ENCODE measurements at regions of chrX and their contacts with region 1.

Region 1: DNA sequence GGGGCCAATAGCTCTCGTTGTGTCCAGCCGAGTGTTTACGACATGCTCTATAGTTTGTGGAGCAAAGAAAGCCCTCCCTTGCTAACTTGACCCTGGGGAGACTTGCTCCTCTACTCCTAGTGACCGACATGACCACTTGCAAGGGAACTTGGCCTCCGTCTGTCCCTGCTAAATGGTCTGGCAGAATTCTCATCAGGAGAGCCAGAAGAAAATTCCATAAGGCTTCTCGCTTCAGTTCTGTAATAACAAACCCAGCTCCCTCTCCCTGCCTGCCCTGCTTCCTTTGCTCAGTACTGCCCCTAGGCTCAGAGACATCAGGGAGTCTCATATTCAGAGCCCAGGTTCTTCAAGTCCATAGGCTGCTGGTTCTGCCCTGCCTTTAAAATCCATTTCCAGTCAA is 13.0 kb downstream of the DOCK11 start:
- H3K4me3 Mint-ChIP-seq: no peak overlapping the region
- H3K27ac Mint-ChIP-seq: peak overlapping the region; percentile 73
- H3K4me1 Mint-ChIP-seq: peaks cover 58% of the 10 kb centered on the region
- H3K27me3 Mint-ChIP-seq: no peaks in the 10 kb centered on the region

Region 2: DNA sequence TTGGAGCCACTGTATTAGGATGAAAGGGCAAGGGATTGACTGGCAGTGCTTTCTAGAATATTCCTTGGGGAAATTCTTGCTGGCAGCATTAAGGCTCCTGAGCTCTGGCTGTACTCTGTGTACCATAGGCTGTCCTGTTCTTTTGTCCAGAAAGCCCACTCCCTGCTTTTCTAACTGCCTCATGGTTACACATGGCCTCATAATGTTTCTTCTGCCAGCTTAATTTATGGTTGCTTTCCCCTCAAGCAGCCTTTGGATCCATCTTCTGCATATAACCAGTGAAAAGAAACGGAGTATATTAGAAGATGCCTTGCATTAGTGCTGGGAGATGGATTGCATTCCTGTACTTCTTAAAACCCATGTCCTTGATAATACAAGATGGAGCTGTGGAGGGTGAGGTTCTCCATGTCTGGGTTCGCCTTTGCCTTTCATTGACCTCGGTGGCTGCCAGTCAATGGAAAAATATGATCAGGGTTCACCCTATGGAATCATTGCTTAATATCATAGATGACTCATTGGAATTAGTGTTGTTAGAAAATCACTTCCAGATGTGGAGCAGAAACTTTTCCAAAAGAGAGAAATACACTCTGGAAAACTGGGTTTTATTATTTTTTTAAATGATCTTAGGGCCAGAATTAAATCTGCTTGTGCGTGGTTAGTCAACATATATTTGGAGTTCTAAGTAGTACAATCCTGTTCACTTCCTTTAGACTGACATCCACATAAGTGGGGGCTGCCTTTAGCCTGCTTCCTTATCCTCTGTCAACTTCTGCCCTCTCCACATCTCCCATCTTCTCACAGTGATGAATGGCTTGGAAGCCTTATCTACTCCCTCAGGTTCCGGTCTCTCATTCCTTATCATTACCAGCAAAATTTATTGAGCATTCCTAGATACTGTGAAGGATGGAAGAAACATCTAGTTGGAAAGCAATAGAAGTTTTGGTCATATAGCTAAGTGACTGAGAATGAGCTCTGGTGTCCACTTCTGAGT is 11.9 kb after region 1 on chrX:
- intact Hi-C with region 1: loop called (anchors 1 kb)
- H3K4me3 Mint-ChIP-seq: no peak overlapping the region
- H3K27ac Mint-ChIP-seq: no peak overlapping the region
- H3K4me1 Mint-ChIP-seq: peaks cover 25% of the 10 kb centered on the region
- H3K27me3 Mint-ChIP-seq: no peaks in the 10 kb centered on the region

Region 3: GRCh38 chrX:118530219-118530911 is 21.7 kb after region 1 on chrX:
- intact Hi-C with region 1: loop called (anchors 2 kb)
- H3K4me3 Mint-ChIP-seq: no peak overlapping the region
- H3K27ac Mint-ChIP-seq: peak overlapping the region; percentile 84
- H3K4me1 Mint-ChIP-seq: peaks cover 46% of the 10 kb centered on the region
- H3K27me3 Mint-ChIP-seq: no peaks in the 10 kb centered on the region

Region 4: GRCh38 chrX:119833905-119834304 is 1325.3 kb after region 1 on chrX:
- intact Hi-C with region 1: no loop called
- H3K4me3 Mint-ChIP-seq: no peak overlapping the region
- H3K27ac Mint-ChIP-seq: no peak overlapping the region
- H3K4me1 Mint-ChIP-seq: peaks cover 6% of the 10 kb centered on the region
- H3K27me3 Mint-ChIP-seq: no peaks in the 10 kb centered on the region

Measured in dendritic cell treated with granulocyte-macrophage colony-stimulating factor and Interleukin-4, amounts not matched to agents 40 ng/mL and 50 ng/mL, for 4 days (primary cell).